CD8-positive, alpha-beta memory T cell (primary cell): ENCODE measurements at regions of chr19 and their contacts with region 1.

Region 1: DNA sequence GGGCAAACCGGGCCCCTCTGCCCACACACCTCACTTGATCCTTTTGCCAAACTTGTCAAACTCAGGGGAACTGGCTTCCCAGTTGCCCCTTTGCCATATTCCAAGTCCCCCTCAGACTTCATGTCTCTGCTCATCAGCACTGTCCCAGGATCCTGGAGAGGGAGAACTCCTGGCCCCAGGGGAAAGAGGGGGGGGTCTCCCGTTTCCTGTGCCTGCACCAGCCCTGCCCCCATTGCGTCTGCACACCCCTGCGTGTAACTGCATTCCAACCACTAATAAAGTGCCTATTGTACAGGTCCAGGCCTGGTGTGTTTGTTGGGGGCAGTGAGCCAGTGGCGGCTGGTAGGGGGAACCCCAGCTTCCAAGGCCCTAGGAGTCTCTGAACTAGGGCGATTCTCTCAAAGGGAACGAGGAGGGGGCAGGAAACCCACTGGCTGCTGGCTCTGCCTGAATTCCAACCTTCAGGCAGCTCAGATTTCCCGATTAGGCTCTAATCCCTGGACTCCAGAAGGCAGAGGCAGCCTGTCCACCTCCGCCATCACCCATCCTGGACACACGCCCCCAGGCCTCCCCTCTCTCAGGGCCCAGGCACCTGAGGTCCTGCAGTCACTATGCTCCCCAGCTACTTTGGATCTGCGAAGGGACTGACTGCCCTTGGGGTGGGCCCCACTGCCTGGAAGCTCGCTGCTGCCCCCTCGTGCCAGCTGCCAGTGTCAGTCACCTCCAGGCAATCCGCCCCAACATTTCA is 9.7 kb upstream of the ILF3 start:
- DNase-seq: peak; percentile 77 to 89 (median 83)
- H3K4me3 ChIP-seq: no peak overlapping the region
- H3K4me3 Mint-ChIP-seq: no peak overlapping the region
- H3K27ac ChIP-seq: no peak overlapping the region
- H3K27ac Mint-ChIP-seq: peak overlapping the region; percentile 21 to 92 (median 78)
- H3K4me1 ChIP-seq: peaks cover 22% of the 10 kb centered on the region
- H3K4me1 Mint-ChIP-seq: peaks cover 16 to 23% (median 16%) of the 10 kb centered on the region in 3 donors
- H3K27me3 ChIP-seq: no peaks in the 10 kb centered on the region
- H3K27me3 Mint-ChIP-seq: peaks cover 0 to 2% of the 10 kb centered on the region in 2 donors

Region 2: GRCh38 chr19:10551698-10552301 is 92.6 kb before region 1 on chr19:
- CTCF ChIA-PET with region 1: interaction called, 11 read pairs
- POLR2A ChIA-PET with region 1: interaction called, 3 read pairs
- DNase-seq: peak in 3 of 5 donors; percentile 33 to 62 (median 48)
- H3K4me3 ChIP-seq: no peak overlapping the region
- H3K4me3 Mint-ChIP-seq: peak overlapping the region in 1 of 7 donors; percentile 61
- H3K27ac ChIP-seq: no peak overlapping the region
- H3K27ac Mint-ChIP-seq: peak overlapping the region; percentile 56 to 98 (median 78)
- H3K4me1 ChIP-seq: peaks cover 56% of the 10 kb centered on the region
- H3K4me1 Mint-ChIP-seq: peaks cover 43 to 65% (median 53%) of the 10 kb centered on the region in 3 donors
- H3K27me3 ChIP-seq: no peaks in the 10 kb centered on the region
- H3K27me3 Mint-ChIP-seq: no peaks in the 10 kb centered on the region

Region 3: GRCh38 chr19:10602330-10603083 is 41.9 kb before region 1 on chr19:
- CTCF ChIA-PET with region 1: interaction called, 37 read pairs
- POLR2A ChIA-PET with region 1: interaction called, 28 read pairs
- DNase-seq: peak; percentile 79 to 90 (median 85)
- H3K4me3 ChIP-seq: peak overlapping the region; percentile 84
- H3K4me3 Mint-ChIP-seq: peak overlapping the region; percentile 97 to 99 (median 99)
- H3K27ac ChIP-seq: peak overlapping the region; percentile 89
- H3K27ac Mint-ChIP-seq: peak overlapping the region; percentile 78 to 99 (median 98)
- H3K4me1 ChIP-seq: peaks cover 22% of the 10 kb centered on the region
- H3K4me1 Mint-ChIP-seq: peaks cover 24 to 42% (median 29%) of the 10 kb centered on the region in 3 donors
- H3K27me3 ChIP-seq: no peaks in the 10 kb centered on the region
- H3K27me3 Mint-ChIP-seq: no peaks in the 10 kb centered on the region

Region 4: DNA sequence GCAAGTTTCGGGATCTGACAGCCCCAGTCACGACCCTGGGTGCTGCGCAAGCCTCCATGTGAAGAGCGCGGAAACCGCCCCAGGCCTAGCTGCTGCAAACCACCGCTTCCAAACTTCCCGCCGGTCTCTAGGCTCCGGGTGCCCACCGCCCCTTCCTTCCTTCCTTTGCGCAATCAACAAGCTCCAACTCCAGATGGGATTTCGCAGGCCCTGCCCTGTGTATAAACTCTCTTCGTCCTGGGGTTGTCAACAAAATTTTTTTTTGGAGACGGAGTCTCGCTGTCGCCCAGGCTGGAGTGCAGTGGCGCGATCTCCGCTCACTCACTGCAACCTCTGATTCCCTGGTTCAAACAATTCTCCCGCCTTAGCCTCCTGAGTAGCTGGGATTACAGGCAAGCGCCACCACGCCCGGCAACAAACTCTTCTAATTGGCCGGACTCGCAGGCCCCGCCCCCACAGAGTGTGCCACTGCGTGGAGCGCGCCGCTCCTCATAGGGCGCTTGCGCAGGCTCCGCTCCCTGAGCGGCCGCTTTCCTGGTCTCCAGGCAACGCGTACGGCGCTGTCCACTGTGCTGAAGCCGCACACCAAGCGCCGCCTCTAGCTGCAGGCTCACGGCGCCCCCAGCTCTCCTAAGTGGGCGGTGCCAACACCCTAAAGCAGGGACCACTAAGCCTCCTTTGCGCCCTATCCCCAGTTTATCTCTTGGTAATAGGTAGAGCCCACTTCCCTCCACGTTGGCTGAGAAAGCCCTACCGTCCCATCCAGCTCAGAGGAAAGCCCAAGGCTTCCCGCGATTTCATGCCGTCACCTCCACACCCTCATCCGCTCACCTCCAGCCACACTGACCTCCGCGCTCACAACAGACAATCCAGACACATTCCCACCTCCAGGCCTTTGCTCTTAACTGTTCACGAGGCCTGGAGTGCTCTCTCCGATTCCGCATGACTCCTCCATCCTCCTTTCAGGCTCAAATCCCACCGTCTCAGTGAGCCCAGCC is 51.3 kb after region 1 on chr19:
- CTCF ChIA-PET with region 1: interaction called, 19 read pairs
- POLR2A ChIA-PET with region 1: interaction called, 5 read pairs
- DNase-seq: peak; percentile 78 to 90 (median 82)
- H3K4me3 ChIP-seq: peak overlapping the region; percentile 43
- H3K4me3 Mint-ChIP-seq: peak overlapping the region; percentile 66 to 88 (median 86)
- H3K27ac ChIP-seq: no peak overlapping the region
- H3K27ac Mint-ChIP-seq: peak overlapping the region in 5 of 8 donors; percentile 44 to 78 (median 64)
- H3K4me1 ChIP-seq: peaks cover 6% of the 10 kb centered on the region
- H3K4me1 Mint-ChIP-seq: peaks cover 15 to 22% (median 16%) of the 10 kb centered on the region in 3 donors
- H3K27me3 ChIP-seq: no peaks in the 10 kb centered on the region
- H3K27me3 Mint-ChIP-seq: peaks cover 5 to 10% of the 10 kb centered on the region in 2 donors

Region 5: GRCh38 chr19:10724551-10725071 is 80.2 kb after region 1 on chr19:
- CTCF ChIA-PET with region 1: no interaction called
- POLR2A ChIA-PET with region 1: no interaction called
- DNase-seq: no peak
- H3K4me3 ChIP-seq: no peak overlapping the region
- H3K4me3 Mint-ChIP-seq: peak overlapping the region in 2 of 7 donors; percentile 30 to 49
- H3K27ac ChIP-seq: no peak overlapping the region
- H3K27ac Mint-ChIP-seq: peak overlapping the region in 6 of 8 donors; percentile 35 to 89 (median 60)
- H3K4me1 ChIP-seq: peaks cover 35% of the 10 kb centered on the region
- H3K4me1 Mint-ChIP-seq: peaks cover 58 to 85% (median 72%) of the 10 kb centered on the region in 3 donors
- H3K27me3 ChIP-seq: no peaks in the 10 kb centered on the region
- H3K27me3 Mint-ChIP-seq: no peaks in the 10 kb centered on the region